HEK293T (cell line): ENCODE measurements at regions of chr18 and their contacts with region 1.

Region 1: GRCh38 chr18:3665780-3666525 is 216.0 kb downstream of the TGIF1 start:
- DNase-seq: peak; percentile 74

Region 2: GRCh38 chr18:3281456-3282400 is 384.2 kb before region 1 on chr18:
- CTCF ChIA-PET with region 1: interaction called, 10 read pairs
- POLR2A ChIA-PET with region 1: no interaction called
- DNase-seq: peak; percentile 15

Region 3: DNA sequence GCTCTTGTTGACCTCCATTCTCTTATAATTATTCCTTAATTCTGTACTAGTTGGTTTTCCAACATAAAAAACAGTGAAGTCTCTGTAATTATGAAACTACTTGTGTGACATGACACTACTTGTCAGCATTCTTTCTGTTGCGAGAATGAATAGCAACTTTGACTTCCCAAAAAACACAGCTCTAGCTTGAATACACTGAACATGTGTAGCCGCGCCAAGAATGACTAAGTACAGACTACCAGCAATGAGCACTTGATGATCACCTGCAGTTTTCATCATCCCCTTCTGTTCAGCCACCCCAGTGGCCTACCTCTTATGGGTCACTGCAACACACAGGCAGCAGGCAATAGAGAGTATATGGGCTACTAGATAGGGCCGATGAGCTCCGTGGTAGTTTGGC is 13.3 kb after region 1 on chr18:
- CTCF ChIA-PET with region 1: no interaction called
- POLR2A ChIA-PET with region 1: no interaction called
- DNase-seq: no peak